ENCODE measurements at regions of chr19 and their contacts with region 1.

Region 1: DNA sequence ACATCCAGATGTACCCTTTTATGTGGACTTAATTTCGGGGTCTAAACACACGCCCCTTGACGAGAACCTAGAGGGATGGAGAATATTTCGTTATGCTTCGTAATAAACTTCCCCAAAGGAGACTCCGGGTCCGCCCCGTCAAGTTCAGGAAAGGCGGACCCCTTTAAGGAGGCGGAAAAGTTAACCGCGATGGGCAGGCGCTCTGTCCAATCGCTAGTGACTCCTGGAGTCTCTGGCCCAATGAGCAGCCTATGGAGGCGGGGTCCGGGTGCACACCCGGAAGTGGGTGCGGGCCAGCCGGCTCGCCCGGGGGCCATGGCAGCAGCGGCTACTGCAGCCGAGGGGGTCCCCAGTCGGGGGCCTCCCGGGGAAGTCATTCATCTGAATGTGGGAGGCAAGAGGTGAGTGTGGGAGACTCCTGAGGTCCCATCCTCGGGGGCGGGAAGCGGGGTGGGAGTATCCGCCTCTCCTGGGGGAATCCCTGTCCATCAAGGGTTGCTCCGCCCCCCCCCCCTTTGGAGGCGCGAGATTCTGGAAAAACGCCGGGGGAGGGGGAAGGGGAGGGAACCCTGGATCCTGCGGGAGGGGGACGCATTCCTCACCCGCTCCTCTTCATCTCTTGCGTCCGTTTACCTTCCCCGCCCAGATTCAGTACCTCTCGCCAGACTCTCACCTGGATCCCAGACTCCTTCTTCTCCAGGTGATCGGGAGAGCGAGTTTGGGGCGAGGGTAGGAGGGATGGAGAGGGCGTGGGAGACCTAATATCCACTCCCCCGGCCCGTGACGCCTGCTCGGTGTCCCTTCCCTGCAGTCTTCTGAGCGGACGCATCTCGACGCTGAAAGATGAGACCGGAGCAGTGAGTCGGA is at the start of gene SHKBP1:
- DNase-seq: peak; percentile 96
- H3K4me3 Mint-ChIP-seq: peak within 1 kb of the TSS; percentile 87
- H3K27ac Mint-ChIP-seq: peak within 1 kb of the TSS; percentile 65
- H3K4me1 Mint-ChIP-seq: peaks cover 16% of the 10 kb centered on the region
- H3K27me3 Mint-ChIP-seq: no peaks in the 10 kb centered on the region
- total RNA-seq, gene SHKBP1: 90.1 to 99.4 TPM

Region 2: GRCh38 chr19:40533508-40533907 is 43.3 kb before region 1 on chr19:
- CTCF ChIA-PET with region 1: no interaction called
- intact Hi-C with region 1: no loop called
- DNase-seq: no peak
- H3K4me3 Mint-ChIP-seq: no peak overlapping the region
- H3K27ac Mint-ChIP-seq: no peak overlapping the region
- H3K4me1 Mint-ChIP-seq: peaks cover 10% of the 10 kb centered on the region
- H3K27me3 Mint-ChIP-seq: peaks cover 13% of the 10 kb centered on the region

Region 3: DNA sequence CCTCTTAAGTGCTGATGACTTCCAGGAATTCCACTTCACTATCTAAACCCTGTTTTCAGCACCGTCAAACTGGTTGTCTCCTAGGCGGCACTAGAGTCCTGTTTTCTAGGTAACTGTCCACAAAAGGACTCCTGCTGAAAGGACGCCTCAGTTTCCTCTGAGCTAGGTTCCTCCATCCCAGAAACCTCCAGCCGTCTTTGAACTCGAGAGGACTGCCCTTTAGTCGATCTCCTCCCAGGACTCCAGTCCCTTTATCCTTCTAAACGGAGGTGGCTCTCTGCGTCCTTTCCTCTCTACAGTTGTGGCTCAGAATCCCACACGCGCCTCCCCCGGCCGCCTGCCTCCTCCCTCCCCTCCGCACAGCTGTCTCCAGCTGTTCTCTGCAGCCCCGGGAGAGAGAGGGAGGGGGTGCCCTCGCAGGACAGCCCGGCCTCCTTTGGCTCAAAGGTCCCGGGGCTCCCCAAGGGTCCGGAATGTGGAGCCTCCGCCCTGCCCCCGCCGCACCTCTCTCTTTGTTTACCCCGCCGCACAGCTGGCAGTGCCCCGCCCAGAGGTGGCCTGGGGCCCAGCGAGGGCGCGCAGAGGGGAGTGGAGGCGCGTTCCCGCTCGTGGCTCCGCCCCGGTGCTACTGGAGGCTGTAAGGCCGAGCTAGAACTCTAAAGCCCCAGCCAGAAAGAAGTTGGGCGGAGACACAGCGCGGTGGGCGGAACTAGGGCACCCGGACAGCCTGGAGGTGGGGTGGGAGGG is 26.7 kb after region 1 on chr19:
- CTCF ChIA-PET with region 1: interaction called, 6 read pairs
- intact Hi-C with region 1: loop called (anchors 2 kb)
- DNase-seq: peak; percentile 98
- H3K4me3 Mint-ChIP-seq: peak overlapping the region; percentile 79
- H3K27ac Mint-ChIP-seq: no peak overlapping the region
- H3K4me1 Mint-ChIP-seq: peaks cover 67% of the 10 kb centered on the region
- H3K27me3 Mint-ChIP-seq: peaks cover 28% of the 10 kb centered on the region

Region 4: DNA sequence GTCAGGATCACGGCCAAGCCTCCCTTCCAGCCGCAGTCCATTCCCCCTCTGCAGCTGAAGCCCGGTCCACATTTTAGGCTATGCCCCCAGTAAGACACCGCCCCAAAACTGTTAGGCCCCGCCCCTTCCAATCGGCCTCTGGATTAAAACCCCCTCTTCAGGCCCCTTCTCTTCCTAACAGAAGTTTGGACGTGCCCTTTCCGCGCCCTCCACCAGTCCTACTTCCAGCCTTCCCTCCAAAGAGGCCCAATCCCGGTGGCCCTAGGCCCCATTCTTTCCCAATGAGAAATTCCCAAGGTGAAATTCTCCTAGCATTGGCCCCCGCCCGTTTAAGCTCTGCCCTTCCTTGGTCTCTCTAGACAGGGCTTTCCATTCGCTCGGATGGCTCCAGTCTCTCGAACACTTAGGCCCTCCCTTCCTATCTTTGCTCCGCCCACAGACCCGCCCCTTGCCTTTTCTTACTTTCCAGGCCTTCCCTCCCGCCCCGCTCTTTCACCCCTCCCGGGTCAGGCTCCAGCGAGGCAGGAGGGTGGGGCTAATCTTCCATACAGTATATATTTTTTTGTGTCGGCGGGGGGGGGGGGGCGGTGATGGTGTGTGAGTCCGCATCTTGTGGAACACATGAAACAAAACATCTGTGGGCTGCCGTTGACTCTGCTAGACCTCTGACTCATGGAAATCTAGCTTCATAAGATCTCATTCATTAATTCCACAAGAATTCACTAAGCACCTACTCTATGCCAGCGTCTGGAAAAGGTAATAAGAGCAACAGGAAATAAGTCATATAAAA is 38.0 kb after region 1 on chr19:
- CTCF ChIA-PET with region 1: no interaction called
- intact Hi-C with region 1: loop called (anchors 1 kb)
- DNase-seq: peak; percentile 98
- H3K4me3 Mint-ChIP-seq: peak overlapping the region; percentile 88
- H3K27ac Mint-ChIP-seq: peak overlapping the region; percentile 97
- H3K4me1 Mint-ChIP-seq: peaks cover 67% of the 10 kb centered on the region
- H3K27me3 Mint-ChIP-seq: no peaks in the 10 kb centered on the region

Measured in activated naive CD4-positive, alpha-beta T cell treated with anti-CD3 and anti-CD28 coated beads for 36 hours (primary cell).